Testis (tissue), 5 donors: ENCODE measurements at regions of chr6 and their contacts with region 1.

Region 1: GRCh38 chr6:52577022-52577777 is at the start of gene TRAM2:
- DNase-seq: peak; percentile 84
- H3K4me3 ChIP-seq: peak within 1 kb of the TSS; percentile 87 to 92
- H3K27ac ChIP-seq: peak within 1 kb of the TSS; percentile 89 to 99
- H3K4me1 ChIP-seq: peaks cover 35% of the 10 kb centered on the region
- H3K27me3 ChIP-seq: no peaks in the 10 kb centered on the region
- CTCF ChIP-seq: no peak
- POLR2A ChIP-seq: no peak
- total RNA-seq, gene TRAM2: 21.1 to 26.1 TPM

Region 2: DNA sequence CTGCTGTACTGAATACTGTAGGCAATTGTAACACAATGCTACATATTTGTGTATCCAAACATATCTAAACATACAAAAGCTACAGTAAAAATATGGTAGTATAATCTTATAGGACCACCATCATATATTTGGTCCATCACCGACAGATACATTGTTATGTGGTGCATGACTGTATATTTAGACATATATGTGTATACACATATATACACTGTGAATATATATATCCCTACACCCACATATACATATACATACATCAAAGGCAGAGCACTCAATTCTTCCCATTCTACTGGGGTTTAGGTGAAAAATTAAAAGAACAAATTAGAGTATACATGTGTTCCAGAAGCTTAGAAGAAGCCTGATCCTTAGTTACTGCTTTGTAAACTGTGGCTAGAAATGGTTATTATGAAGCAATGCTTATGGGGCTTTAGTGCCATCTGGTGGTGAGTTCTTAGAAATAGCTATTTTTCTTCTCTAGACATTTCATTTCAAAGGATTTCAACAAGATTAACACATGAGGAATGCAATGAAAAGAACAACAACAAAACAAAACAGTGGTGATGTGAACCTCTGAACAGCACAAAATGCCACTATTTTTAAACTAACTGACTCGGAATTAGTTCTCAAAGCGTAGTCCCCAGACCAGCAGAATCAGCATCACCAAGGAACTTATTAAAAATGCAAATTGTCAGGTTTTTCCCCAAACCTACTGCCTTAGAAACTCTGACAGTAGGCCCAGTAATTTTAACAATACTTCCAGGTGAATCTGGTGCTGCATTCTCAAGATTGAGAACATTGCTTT is 527.7 kb before region 1 on chr6:
- intact Hi-C with region 1: no loop called
- DNase-seq: no peak
- H3K4me3 ChIP-seq: no peak overlapping the region
- H3K27ac ChIP-seq: no peak overlapping the region
- H3K4me1 ChIP-seq: no peaks in the 10 kb centered on the region
- H3K27me3 ChIP-seq: no peaks in the 10 kb centered on the region
- CTCF ChIP-seq: peak in 2 of 3 experiments; percentile 26 to 56
- POLR2A ChIP-seq: no peak

Region 3: GRCh38 chr6:52517502-52518278 is 59.5 kb before region 1 on chr6:
- intact Hi-C with region 1: loop called (anchors 10 kb)
- DNase-seq: peak; percentile 90
- H3K4me3 ChIP-seq: no peak overlapping the region
- H3K27ac ChIP-seq: peak overlapping the region; percentile 79 to 87
- H3K4me1 ChIP-seq: peaks cover 64% of the 10 kb centered on the region
- H3K27me3 ChIP-seq: no peaks in the 10 kb centered on the region
- CTCF ChIP-seq: no peak
- POLR2A ChIP-seq: no peak